Activated CD4-positive, alpha-beta T cell treated with anti-CD3 and anti-CD28 coated beads for 36 hours (primary cell): ENCODE measurements at regions of chr2 and their contacts with region 1.

Region 1: GRCh38 chr2:44044281-44044720 is 48.5 kb upstream of the LRPPRC start:
- DNase-seq: peak; percentile 91
- ATAC-seq: peak; percentile 100
- H3K4me3 Mint-ChIP-seq: no peak overlapping the region
- H3K27ac Mint-ChIP-seq: no peak overlapping the region
- H3K4me1 Mint-ChIP-seq: no peaks in the 10 kb centered on the region
- H3K27me3 Mint-ChIP-seq: peaks cover 2% of the 10 kb centered on the region

Region 2: DNA sequence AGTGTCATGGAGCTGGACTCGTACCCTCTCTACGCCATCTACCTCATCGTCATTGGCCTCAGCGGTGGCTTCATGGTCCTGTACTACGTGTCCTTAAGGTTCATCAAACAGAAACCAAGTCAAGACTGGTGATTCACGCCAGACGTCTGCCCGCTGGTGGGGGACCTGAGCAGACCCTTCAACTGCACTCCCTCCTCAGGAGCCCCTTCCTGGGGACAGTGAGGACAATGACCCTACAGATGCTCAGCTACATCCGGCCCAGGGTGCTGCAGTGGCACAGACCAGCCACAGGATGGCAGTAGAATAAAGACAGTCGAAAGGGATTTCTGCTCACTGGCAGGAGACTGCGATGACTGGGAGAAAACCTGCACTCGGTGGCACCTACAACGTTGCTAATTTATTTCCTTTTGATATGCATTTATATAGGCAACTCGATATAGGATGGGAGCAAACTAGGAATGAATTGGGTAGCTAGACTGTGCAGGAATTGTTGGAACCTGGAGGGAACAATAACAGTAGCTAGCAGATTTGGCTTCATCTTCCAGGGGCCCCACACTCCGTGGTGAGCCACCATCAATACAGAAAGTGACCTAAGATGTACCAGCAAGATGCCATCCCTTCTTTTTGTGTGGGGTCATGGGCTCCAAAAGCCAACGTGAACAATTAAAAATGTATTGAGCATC is 166.4 kb before region 1 on chr2:
- CTCF ChIA-PET with region 1: interaction called, 3 read pairs
- POLR2A ChIA-PET with region 1: no interaction called
- intact Hi-C with region 1: loop called in 1 of 2 experiments (anchors 1 kb)
- DNase-seq: peak; percentile 84
- ATAC-seq: peak; percentile 88
- H3K4me3 Mint-ChIP-seq: no peak overlapping the region
- H3K27ac Mint-ChIP-seq: no peak overlapping the region
- H3K4me1 Mint-ChIP-seq: peaks cover 6% of the 10 kb centered on the region
- H3K27me3 Mint-ChIP-seq: peaks cover 11% of the 10 kb centered on the region

Region 3: DNA sequence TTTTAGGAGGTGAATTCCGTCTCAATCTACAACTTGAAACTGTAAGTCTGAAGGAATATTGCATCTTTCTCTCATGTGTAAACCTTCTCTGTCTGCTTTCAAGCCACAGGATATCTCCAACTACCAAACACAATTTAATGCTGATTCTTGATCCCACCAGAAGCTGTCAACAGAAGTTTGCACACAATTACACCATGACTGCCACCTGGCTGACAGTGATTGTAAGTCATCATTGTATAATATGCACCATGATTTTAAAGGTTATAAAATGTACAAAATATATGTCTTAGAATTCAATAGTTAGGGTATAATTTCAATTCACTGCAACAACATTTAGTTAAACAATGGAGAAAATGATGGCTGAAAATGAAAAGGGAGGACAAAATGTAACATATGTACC is 298.6 kb after region 1 on chr2:
- CTCF ChIA-PET with region 1: interaction called, 3 read pairs
- POLR2A ChIA-PET with region 1: no interaction called
- intact Hi-C with region 1: loop called in 1 of 2 experiments (anchors 5 kb)
- DNase-seq: peak; percentile 33
- ATAC-seq: no peak
- H3K4me3 Mint-ChIP-seq: no peak overlapping the region
- H3K27ac Mint-ChIP-seq: no peak overlapping the region
- H3K4me1 Mint-ChIP-seq: no peaks in the 10 kb centered on the region
- H3K27me3 Mint-ChIP-seq: no peaks in the 10 kb centered on the region

Region 4: DNA sequence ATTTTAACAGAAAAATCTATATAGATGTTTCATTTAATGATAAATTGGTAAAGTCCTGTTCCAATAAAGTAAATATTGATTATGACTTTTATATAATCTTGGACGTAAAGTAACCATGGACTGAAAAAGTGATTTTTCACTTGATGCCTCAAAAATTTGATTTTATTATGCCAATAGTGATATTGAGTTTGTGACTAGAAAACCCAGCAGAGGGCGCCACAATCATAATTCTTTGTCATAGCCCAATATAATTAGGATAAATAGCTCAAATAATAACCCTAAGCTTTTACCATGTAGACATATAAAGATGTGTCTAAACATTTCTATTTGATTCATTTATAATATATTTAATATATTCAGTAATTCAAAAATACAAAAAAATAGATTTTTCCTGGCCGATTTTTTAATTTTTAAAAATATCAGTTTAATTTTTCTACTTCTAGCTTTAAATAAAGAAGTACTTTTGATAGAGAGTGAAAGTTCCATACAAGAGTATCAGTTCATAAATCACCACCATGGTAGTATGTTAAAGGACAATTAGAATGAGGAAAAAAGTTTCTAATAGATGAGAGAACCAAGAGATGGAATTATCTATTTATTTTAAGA is 348.1 kb after region 1 on chr2:
- CTCF ChIA-PET with region 1: interaction called, 4 read pairs
- POLR2A ChIA-PET with region 1: no interaction called
- intact Hi-C with region 1: loop called in 1 of 2 experiments (anchors 5 kb)
- DNase-seq: peak; percentile 69
- ATAC-seq: no peak
- H3K4me3 Mint-ChIP-seq: no peak overlapping the region
- H3K27ac Mint-ChIP-seq: no peak overlapping the region
- H3K4me1 Mint-ChIP-seq: peaks cover 3% of the 10 kb centered on the region
- H3K27me3 Mint-ChIP-seq: no peaks in the 10 kb centered on the region